ENCODE measurements at regions of chr5 and their contacts with region 1.

Region 1: DNA sequence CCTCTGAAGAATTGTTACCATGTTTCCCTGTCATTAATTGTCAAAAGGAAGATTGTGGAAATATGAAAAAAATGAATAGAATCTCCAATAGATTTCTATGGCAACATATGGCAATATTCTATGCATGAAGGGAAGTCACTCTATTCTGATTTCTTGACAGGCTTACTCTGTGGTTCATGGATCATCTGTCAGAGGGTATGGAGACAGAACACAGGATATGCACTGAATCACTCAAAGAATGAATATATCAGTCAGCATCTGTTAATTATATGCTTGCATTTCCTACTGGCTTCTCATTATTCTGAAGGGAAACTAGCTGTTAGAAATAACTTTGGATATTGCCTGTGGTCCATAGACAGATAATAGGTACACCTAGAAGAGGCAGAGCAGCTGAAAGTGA is 918.9 kb downstream of the DTWD2 start:
- DNase-seq: no peak
- H3K4me3 ChIP-seq: no peak overlapping the region
- CTCF ChIP-seq: no peak
- POLR2A ChIP-seq: no peak

Region 2: GRCh38 chr5:116479776-116480675 is 1589.4 kb before region 1 on chr5:
- intact Hi-C with region 1: loop called (anchors 5 kb)
- DNase-seq: no peak
- H3K4me3 ChIP-seq: no peak overlapping the region
- CTCF ChIP-seq: no peak
- POLR2A ChIP-seq: no peak

Region 3: DNA sequence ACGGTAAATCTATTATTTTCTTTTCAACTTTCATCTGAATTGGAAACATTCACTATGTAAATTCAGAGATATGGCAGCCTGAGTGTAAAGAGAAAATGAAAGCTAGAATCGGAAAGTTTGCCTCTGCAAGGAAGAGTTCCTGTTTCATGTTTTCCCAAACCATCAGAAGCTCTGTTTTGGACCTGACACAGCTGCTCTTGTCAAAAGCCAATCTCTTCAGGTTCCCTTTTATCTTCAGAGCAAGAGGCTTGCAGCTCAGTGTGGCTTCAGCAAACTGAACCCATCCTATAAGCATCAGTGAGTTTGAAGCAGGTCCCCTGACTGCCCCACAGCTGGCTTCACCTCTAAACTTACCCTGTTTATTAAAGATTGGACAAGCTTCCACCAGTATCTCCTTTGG is 180.8 kb before region 1 on chr5:
- intact Hi-C with region 1: no loop called
- DNase-seq: no peak
- H3K4me3 ChIP-seq: no peak overlapping the region
- CTCF ChIP-seq: no peak
- POLR2A ChIP-seq: no peak

Region 4: GRCh38 chr5:118439831-118440230 is 370.4 kb after region 1 on chr5:
- intact Hi-C with region 1: no loop called
- DNase-seq: no peak
- H3K4me3 ChIP-seq: no peak overlapping the region
- CTCF ChIP-seq: no peak
- POLR2A ChIP-seq: no peak